Heart left ventricle (tissue), 16 donors: ENCODE measurements at regions of chr7 and their contacts with region 1.

Region 1: GRCh38 chr7:6272481-6273323 is at the start of gene CYTH3:
- DNase-seq: peak; percentile 72 to 93 (median 88)
- ATAC-seq: peak; percentile 79 to 97 (median 92)
- H3K4me3 ChIP-seq: peak within 1 kb of the TSS; percentile 75 to 98 (median 94)
- H3K27ac ChIP-seq: peak within 1 kb of the TSS; percentile 73 to 95 (median 90)
- H3K4me1 ChIP-seq: peaks cover 7 to 43% (median 27%) of the 10 kb centered on the region in 12 donors
- H3K27me3 ChIP-seq: no peaks in the 10 kb centered on the region
- CTCF ChIP-seq: peak in 1 of 12 donors; percentile 3
- POLR2A ChIP-seq: peak; percentile 10 to 53
- total RNA-seq, gene CYTH3: 17.2 to 49.7 (median 22.1) TPM

Region 2: DNA sequence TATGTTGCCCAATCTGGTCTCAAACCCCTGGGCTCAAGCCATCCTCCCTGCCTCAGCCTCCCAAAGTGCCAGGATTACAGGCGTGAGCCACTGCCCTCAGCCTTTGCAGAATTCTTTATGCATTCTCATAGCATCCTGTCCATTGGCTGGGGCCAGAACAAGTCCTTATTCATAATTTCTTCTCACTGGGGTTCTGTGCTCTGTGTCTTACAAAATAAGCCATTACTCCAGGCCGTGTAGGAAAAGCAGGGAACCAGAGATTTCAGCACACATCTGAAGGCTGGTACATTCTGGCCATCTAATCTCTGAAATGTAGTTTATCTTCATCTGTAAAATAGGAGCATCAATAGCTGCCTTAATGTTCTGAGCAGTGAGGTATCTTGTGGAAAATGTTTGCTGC is 402.4 kb before region 1 on chr7:
- intact Hi-C with region 1: no loop called
- DNase-seq: no peak
- ATAC-seq: no peak
- H3K4me3 ChIP-seq: no peak overlapping the region
- H3K27ac ChIP-seq: no peak overlapping the region
- H3K4me1 ChIP-seq: no peaks in the 10 kb centered on the region
- H3K27me3 ChIP-seq: peaks cover 0 to 6% (median 0%) of the 10 kb centered on the region in 9 donors
- CTCF ChIP-seq: no peak
- POLR2A ChIP-seq: no peak

Region 3: GRCh38 chr7:6160191-6160623 is 112.5 kb before region 1 on chr7:
- intact Hi-C with region 1: loop called (anchors 2 to 5 kb)
- DNase-seq: peak in 4 of 5 donors; percentile 69 to 78 (median 73)
- ATAC-seq: peak; percentile 14 to 73 (median 61)
- H3K4me3 ChIP-seq: no peak overlapping the region
- H3K27ac ChIP-seq: peak overlapping the region in 11 of 12 donors; percentile 2 to 58 (median 47)
- H3K4me1 ChIP-seq: peaks cover 3 to 59% (median 34%) of the 10 kb centered on the region in 12 donors
- H3K27me3 ChIP-seq: no peaks in the 10 kb centered on the region
- CTCF ChIP-seq: peak; percentile 52 to 84 (median 74)
- POLR2A ChIP-seq: no peak

Region 4: GRCh38 chr7:6175645-6176044 is 97.1 kb before region 1 on chr7:
- intact Hi-C with region 1: loop called in 1 of 10 experiments (anchors 5 kb)
- DNase-seq: no peak
- ATAC-seq: no peak
- H3K4me3 ChIP-seq: no peak overlapping the region
- H3K27ac ChIP-seq: peak overlapping the region in 2 of 12 donors; percentile 41
- H3K4me1 ChIP-seq: peaks cover 7 to 67% (median 33%) of the 10 kb centered on the region in 12 donors
- H3K27me3 ChIP-seq: no peaks in the 10 kb centered on the region
- CTCF ChIP-seq: no peak
- POLR2A ChIP-seq: no peak

Region 5: GRCh38 chr7:6228361-6229229 is 44.1 kb before region 1 on chr7:
- intact Hi-C with region 1: loop called in 7 of 10 experiments (anchors 5 to 10 kb)
- DNase-seq: peak in 2 of 5 donors; percentile 39 to 45
- ATAC-seq: peak; percentile 54 to 73 (median 70)
- H3K4me3 ChIP-seq: peak overlapping the region in 7 of 12 donors; percentile 6 to 32 (median 9)
- H3K27ac ChIP-seq: peak overlapping the region; percentile 40 to 78 (median 70)
- H3K4me1 ChIP-seq: peaks cover 8 to 100% (median 71%) of the 10 kb centered on the region in 12 donors
- H3K27me3 ChIP-seq: no peaks in the 10 kb centered on the region
- CTCF ChIP-seq: no peak
- POLR2A ChIP-seq: no peak

Region 6: DNA sequence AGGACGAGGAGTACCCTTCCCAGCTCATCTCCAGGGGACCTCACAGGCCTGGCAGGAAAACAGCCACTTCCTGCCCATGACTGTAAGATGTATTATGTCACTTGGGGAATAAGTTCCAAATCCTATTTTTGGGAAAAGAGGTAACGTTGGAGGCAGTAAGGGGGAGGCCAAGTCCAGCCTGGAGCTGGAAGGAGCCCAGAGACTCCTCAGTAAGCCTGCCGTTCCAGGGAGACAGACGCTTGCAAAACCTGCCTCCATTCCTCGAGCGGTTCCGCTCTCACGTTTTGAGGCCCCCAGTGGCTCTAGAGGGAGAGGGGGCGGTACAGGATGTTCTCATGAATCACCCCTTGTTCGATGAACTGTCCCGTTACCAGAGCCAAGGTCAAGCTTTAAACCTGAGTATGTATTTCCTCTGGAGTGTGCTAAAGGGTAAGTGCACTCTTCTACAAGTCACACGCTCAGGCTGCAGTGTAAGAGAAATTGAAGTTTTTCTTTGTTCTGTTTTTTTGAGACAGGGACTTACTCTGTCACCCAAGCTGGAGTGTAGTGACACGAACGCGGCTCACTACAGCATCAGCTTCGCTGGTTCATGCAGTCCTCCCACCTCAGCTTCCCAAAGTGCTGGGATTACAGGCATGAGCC is 45.2 kb after region 1 on chr7:
- intact Hi-C with region 1: loop called in 7 of 10 experiments (anchors 2 to 5 kb)
- DNase-seq: peak; percentile 73 to 86 (median 78)
- ATAC-seq: peak; percentile 77 to 94 (median 93)
- H3K4me3 ChIP-seq: peak overlapping the region in 10 of 12 donors; percentile 10 to 43 (median 28)
- H3K27ac ChIP-seq: peak overlapping the region; percentile 43 to 82 (median 74)
- H3K4me1 ChIP-seq: peaks cover 0 to 29% (median 14%) of the 10 kb centered on the region in 12 donors
- H3K27me3 ChIP-seq: no peaks in the 10 kb centered on the region
- CTCF ChIP-seq: no peak
- POLR2A ChIP-seq: peak in 1 of 2 donors; percentile 13